Endothelial cell of umbilical vein (primary cell): ENCODE measurements at regions of chr6 and their contacts with region 1.

Region 1: DNA sequence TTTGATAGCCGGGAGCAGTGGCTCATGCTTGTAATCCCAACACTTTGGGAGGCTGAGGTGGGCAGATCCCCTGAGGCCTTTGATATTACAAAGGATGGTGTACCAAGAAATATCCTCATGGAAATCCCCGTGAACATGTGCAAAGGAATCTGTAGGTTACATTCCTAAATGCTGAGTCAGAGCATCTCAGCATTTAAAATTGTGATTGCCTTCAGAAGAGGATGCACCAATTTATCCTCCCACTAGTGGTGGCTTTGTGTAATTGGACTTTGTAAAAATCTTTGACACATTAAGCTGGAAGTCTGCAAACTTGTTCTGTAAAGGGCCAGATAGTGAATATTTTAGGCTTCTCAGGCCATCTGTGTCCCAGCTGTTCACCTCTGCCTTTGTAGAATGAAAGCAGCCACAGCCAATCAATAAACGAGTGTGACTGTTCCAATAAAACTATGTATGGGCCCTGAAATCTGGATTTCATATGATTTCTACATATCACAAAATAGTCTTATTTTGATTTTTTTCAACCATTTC is 11.8 kb downstream of the TMEM14B start:
- DNase-seq: peak; percentile 85
- H3K4me3 ChIP-seq: no peak overlapping the region
- H3K27ac ChIP-seq: peak overlapping the region; percentile 41
- H3K4me1 ChIP-seq: peaks cover 15% of the 10 kb centered on the region
- H3K27me3 ChIP-seq: no peaks in the 10 kb centered on the region
- CTCF ChIP-seq: peak; percentile 46 to 47
- POLR2A ChIP-seq: no peak

Region 2: GRCh38 chr6:10510592-10511367 is 248.6 kb before region 1 on chr6:
- CTCF ChIA-PET with region 1: interaction called, 7 read pairs
- POLR2A ChIA-PET with region 1: no interaction called
- dilution Hi-C with region 1: no loop called
- intact Hi-C with region 1: loop called (anchors 1 kb)
- DNase-seq: peak; percentile 75
- H3K4me3 ChIP-seq: no peak overlapping the region
- H3K27ac ChIP-seq: no peak overlapping the region
- H3K4me1 ChIP-seq: no peaks in the 10 kb centered on the region
- H3K27me3 ChIP-seq: peaks cover 0 to 4% of the 10 kb centered on the region in 2 experiments
- CTCF ChIP-seq: peak; percentile 82 to 83
- POLR2A ChIP-seq: no peak

Region 3: GRCh38 chr6:10582774-10583508 is 176.4 kb before region 1 on chr6:
- CTCF ChIA-PET with region 1: no interaction called
- POLR2A ChIA-PET with region 1: no interaction called
- dilution Hi-C with region 1: no loop called
- intact Hi-C with region 1: no loop called
- DNase-seq: no peak
- H3K4me3 ChIP-seq: no peak overlapping the region
- H3K27ac ChIP-seq: no peak overlapping the region
- H3K4me1 ChIP-seq: no peaks in the 10 kb centered on the region
- H3K27me3 ChIP-seq: no peaks in the 10 kb centered on the region
- CTCF ChIP-seq: no peak
- POLR2A ChIP-seq: no peak

Region 4: GRCh38 chr6:10722820-10723566 is 36.4 kb before region 1 on chr6 and contains the start of gene TMEM14C:
- CTCF ChIA-PET with region 1: interaction called, 21 read pairs
- POLR2A ChIA-PET with region 1: interaction called, 3 read pairs
- dilution Hi-C with region 1: no loop called
- intact Hi-C with region 1: loop called (anchors 1 kb)
- DNase-seq: peak; percentile 98
- H3K4me3 ChIP-seq: peak within 1 kb of the TSS; percentile 59 to 79 (median 76)
- H3K27ac ChIP-seq: peak within 1 kb of the TSS; percentile 83
- H3K4me1 ChIP-seq: peaks cover 10% of the 10 kb centered on the region
- H3K27me3 ChIP-seq: no peaks in the 10 kb centered on the region
- CTCF ChIP-seq: no peak
- POLR2A ChIP-seq: peak; percentile 88
- total RNA-seq, gene TMEM14C: 68.0 and 89.3 TPM in 2 replicates

Region 5: DNA sequence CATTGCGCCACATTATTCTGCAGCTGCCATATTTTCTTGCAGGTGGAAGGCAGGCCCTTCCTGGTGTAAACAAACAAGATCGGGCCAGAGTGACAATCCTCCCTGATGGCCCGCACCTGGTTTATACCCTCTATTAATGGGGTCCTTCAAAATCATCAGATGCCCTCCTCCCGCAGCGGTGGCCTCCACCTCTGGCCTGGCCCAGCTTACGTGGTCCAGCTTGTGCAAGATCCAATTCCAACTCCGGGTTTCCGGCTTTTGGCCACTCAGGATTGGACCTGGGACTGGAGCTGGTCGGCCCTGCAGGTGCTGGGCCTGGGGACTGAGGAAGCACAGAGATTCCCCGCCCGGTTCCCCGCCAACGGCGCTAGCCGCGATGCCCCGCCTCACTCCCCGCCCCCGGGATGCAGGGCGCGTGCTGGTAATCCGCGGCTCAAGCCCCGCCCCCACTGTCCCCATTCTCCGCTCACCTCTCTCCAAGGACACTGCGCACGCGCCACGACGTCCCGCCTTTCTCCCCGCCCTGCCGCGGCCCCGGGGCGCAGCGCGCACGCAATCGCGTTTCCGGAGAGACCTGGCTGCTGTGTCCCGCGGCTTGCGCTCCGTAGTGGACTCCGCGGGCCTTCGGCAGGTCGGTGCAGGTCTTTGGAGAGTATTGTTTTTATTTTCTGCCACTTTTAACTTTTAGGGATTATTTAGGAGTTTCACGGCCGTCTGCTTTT is 12.0 kb before region 1 on chr6 and contains the start of gene TMEM14B:
- CTCF ChIA-PET with region 1: interaction called, 13 read pairs
- POLR2A ChIA-PET with region 1: no interaction called
- dilution Hi-C with region 1: no loop called
- intact Hi-C with region 1: loop called (anchors 1 kb)
- DNase-seq: peak; percentile 97
- H3K4me3 ChIP-seq: peak within 1 kb of the TSS; percentile 59 to 94 (median 91)
- H3K27ac ChIP-seq: peak within 1 kb of the TSS; percentile 81
- H3K4me1 ChIP-seq: peaks cover 16% of the 10 kb centered on the region
- H3K27me3 ChIP-seq: no peaks in the 10 kb centered on the region
- CTCF ChIP-seq: no peak
- POLR2A ChIP-seq: peak; percentile 94
- total RNA-seq, gene TMEM14B: 54.6 and 58.2 TPM in 2 replicates

Region 6: DNA sequence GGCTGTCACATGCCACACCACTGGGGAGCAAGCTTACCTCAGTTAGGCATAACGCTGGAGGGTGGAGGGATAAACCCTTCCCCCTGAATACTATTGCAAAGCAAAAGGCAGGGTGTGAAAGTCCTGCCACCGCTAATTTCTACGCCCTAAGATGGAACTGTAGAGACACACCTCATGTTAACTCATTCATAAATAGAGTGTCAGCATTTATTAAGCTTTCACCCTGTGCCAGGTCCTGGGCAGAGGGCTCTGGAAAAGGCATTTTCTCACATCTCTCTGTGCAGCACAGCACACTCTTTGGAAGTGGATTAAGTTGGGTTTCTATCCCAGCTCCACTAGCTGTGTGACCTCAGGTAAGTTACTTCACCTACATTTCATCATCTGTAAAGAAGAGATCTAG is 10.0 kb after region 1 on chr6:
- CTCF ChIA-PET with region 1: interaction called, 13 read pairs
- POLR2A ChIA-PET with region 1: no interaction called
- dilution Hi-C with region 1: no loop called
- intact Hi-C with region 1: no loop called
- DNase-seq: no peak
- H3K4me3 ChIP-seq: no peak overlapping the region
- H3K27ac ChIP-seq: no peak overlapping the region
- H3K4me1 ChIP-seq: no peaks in the 10 kb centered on the region
- H3K27me3 ChIP-seq: no peaks in the 10 kb centered on the region
- CTCF ChIP-seq: no peak
- POLR2A ChIP-seq: no peak

Region 7: GRCh38 chr6:10800829-10801535 is 41.6 kb after region 1 on chr6:
- CTCF ChIA-PET with region 1: interaction called, 4 read pairs
- POLR2A ChIA-PET with region 1: interaction called, 6 read pairs
- dilution Hi-C with region 1: no loop called
- intact Hi-C with region 1: loop called (anchors 1 kb)
- DNase-seq: peak; percentile 64
- H3K4me3 ChIP-seq: no peak overlapping the region
- H3K27ac ChIP-seq: no peak overlapping the region
- H3K4me1 ChIP-seq: peaks cover 2% of the 10 kb centered on the region
- H3K27me3 ChIP-seq: no peaks in the 10 kb centered on the region
- CTCF ChIP-seq: peak; percentile 94 to 99
- POLR2A ChIP-seq: no peak